ENCODE measurements at regions of chr1 and their contacts with region 1.

Region 1: GRCh38 chr1:36475910-36476604 is 6.7 kb downstream of the CSF3R start:
- DNase-seq: no peak
- H3K4me3 Mint-ChIP-seq: no peak overlapping the region
- H3K27ac Mint-ChIP-seq: no peak overlapping the region
- H3K4me1 Mint-ChIP-seq: peaks cover 6% of the 10 kb centered on the region
- H3K27me3 Mint-ChIP-seq: no peaks in the 10 kb centered on the region

Region 2: GRCh38 chr1:36450270-36450918 is 25.7 kb before region 1 on chr1 and contains the start of gene OSCP1:
- CTCF ChIA-PET with region 1: no interaction called
- POLR2A ChIA-PET with region 1: no interaction called
- intact Hi-C with region 1: loop called (anchors 1 kb)
- DNase-seq: peak; percentile 92
- H3K4me3 Mint-ChIP-seq: peak within 1 kb of the TSS; percentile 88
- H3K27ac Mint-ChIP-seq: peak within 1 kb of the TSS; percentile 79
- H3K4me1 Mint-ChIP-seq: peaks cover 14% of the 10 kb centered on the region
- H3K27me3 Mint-ChIP-seq: no peaks in the 10 kb centered on the region
- total RNA-seq, gene OSCP1: 1.8 to 2.7 TPM

Region 3: GRCh38 chr1:36458654-36459309 is 17.3 kb before region 1 on chr1:
- CTCF ChIA-PET with region 1: interaction called, 5 read pairs
- POLR2A ChIA-PET with region 1: interaction called, 3 read pairs
- intact Hi-C with region 1: loop called (anchors 2 kb)
- DNase-seq: peak; percentile 85
- H3K4me3 Mint-ChIP-seq: no peak overlapping the region
- H3K27ac Mint-ChIP-seq: peak overlapping the region; percentile 77
- H3K4me1 Mint-ChIP-seq: peaks cover 44% of the 10 kb centered on the region
- H3K27me3 Mint-ChIP-seq: no peaks in the 10 kb centered on the region

Region 4: GRCh38 chr1:36463803-36464604 is 12.1 kb before region 1 on chr1 and contains the start of gene MRPS15:
- CTCF ChIA-PET with region 1: interaction called, 5 read pairs
- POLR2A ChIA-PET with region 1: interaction called, 3 read pairs
- intact Hi-C with region 1: loop called (anchors 1 kb)
- DNase-seq: peak; percentile 98
- H3K4me3 Mint-ChIP-seq: peak within 1 kb of the TSS; percentile 99
- H3K27ac Mint-ChIP-seq: peak within 1 kb of the TSS; percentile 95
- H3K4me1 Mint-ChIP-seq: peaks cover 31% of the 10 kb centered on the region
- H3K27me3 Mint-ChIP-seq: no peaks in the 10 kb centered on the region
- total RNA-seq, gene MRPS15: 113 to 115 TPM

Measured in activated CD4-positive, alpha-beta memory T cell treated with anti-CD3 and anti-CD28 coated beads for 36 hours (primary cell).